Caco-2 (cell line): ENCODE measurements at regions of chr11 and their contacts with region 1.

Region 1: DNA sequence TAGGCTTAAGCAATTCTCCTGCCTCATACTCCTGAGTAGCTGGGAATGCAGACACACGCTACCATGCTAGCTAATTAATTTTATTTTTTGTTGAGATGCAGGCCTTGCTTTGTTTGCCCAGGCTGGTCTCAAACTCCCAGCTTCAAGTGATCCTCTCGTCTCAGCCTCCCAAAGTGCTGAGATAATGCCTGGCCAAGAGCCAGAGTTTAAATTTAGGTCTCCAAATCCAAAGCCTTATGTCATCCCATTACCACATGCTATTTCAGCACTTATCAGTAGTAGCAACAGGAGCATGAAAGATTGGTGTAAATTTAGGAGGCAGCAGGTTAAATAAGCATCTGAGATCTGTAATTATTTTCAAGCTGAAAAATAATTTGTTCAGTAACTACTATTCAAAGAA is 326.1 kb upstream of the ANO5 start:
- DNase-seq: no peak
- H3K4me3 ChIP-seq: no peak overlapping the region
- H3K4me3 Mint-ChIP-seq: no peak overlapping the region
- H3K27ac Mint-ChIP-seq: no peak overlapping the region
- H3K4me1 ChIP-seq: no peaks in the 10 kb centered on the region
- H3K4me1 Mint-ChIP-seq: no peaks in the 10 kb centered on the region
- H3K27me3 ChIP-seq: no peaks in the 10 kb centered on the region
- H3K27me3 Mint-ChIP-seq: peaks cover 3% of the 10 kb centered on the region
- CTCF ChIP-seq: no peak

Region 2: GRCh38 chr11:21896746-21897602 is 30.2 kb after region 1 on chr11:
- CTCF ChIA-PET with region 1: no interaction called
- POLR2A ChIA-PET with region 1: no interaction called
- intact Hi-C with region 1: no loop called
- DNase-seq: no peak
- H3K4me3 ChIP-seq: no peak overlapping the region
- H3K4me3 Mint-ChIP-seq: no peak overlapping the region
- H3K27ac Mint-ChIP-seq: no peak overlapping the region
- H3K4me1 ChIP-seq: no peaks in the 10 kb centered on the region
- H3K4me1 Mint-ChIP-seq: no peaks in the 10 kb centered on the region
- H3K27me3 ChIP-seq: no peaks in the 10 kb centered on the region
- H3K27me3 Mint-ChIP-seq: no peaks in the 10 kb centered on the region
- CTCF ChIP-seq: no peak

Region 3: DNA sequence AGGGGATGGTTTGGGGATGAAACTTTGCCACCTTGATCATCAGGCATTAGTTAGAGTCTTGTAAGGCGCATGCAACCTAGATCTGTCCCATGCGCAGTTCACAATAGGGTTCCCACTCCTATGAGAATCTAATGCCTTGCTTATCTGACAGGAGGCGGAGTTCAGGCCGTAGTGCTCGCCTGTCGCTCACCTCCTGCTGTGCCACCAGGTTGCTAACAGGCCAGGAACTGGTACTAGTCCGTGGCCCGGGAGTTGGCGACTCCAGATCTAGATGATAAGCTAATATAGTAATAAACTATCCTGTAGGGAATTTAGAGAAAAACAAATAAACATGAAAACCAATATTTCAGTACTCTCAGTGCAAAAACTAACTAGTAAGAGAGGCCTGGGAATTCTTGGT is 170.7 kb after region 1 on chr11:
- CTCF ChIA-PET with region 1: no interaction called
- POLR2A ChIA-PET with region 1: no interaction called
- intact Hi-C with region 1: no loop called
- DNase-seq: no peak
- H3K4me3 ChIP-seq: no peak overlapping the region
- H3K4me3 Mint-ChIP-seq: no peak overlapping the region
- H3K27ac Mint-ChIP-seq: no peak overlapping the region
- H3K4me1 ChIP-seq: no peaks in the 10 kb centered on the region
- H3K4me1 Mint-ChIP-seq: no peaks in the 10 kb centered on the region
- H3K27me3 ChIP-seq: no peaks in the 10 kb centered on the region
- H3K27me3 Mint-ChIP-seq: peaks cover 4% of the 10 kb centered on the region
- CTCF ChIP-seq: no peak

Region 4: GRCh38 chr11:22130462-22131053 is 263.8 kb after region 1 on chr11:
- CTCF ChIA-PET with region 1: no interaction called
- POLR2A ChIA-PET with region 1: no interaction called
- intact Hi-C with region 1: loop called (anchors 1 kb)
- DNase-seq: no peak
- H3K4me3 ChIP-seq: no peak overlapping the region
- H3K4me3 Mint-ChIP-seq: no peak overlapping the region
- H3K27ac Mint-ChIP-seq: no peak overlapping the region
- H3K4me1 ChIP-seq: no peaks in the 10 kb centered on the region
- H3K4me1 Mint-ChIP-seq: no peaks in the 10 kb centered on the region
- H3K27me3 ChIP-seq: no peaks in the 10 kb centered on the region
- H3K27me3 Mint-ChIP-seq: no peaks in the 10 kb centered on the region
- CTCF ChIP-seq: peak; percentile 43 to 45